Pancreas (tissue), 10 donors: ENCODE measurements at regions of chrX and their contacts with region 1.

Region 1: GRCh38 chrX:78048052-78048451 is 56.0 kb upstream of the PGK1 start:
- DNase-seq: no peak
- ATAC-seq: no peak
- H3K4me3 ChIP-seq: no peak overlapping the region
- H3K27ac ChIP-seq: no peak overlapping the region
- H3K4me1 ChIP-seq: no peaks in the 10 kb centered on the region
- H3K27me3 ChIP-seq: no peaks in the 10 kb centered on the region
- CTCF ChIP-seq: no peak

Region 2: DNA sequence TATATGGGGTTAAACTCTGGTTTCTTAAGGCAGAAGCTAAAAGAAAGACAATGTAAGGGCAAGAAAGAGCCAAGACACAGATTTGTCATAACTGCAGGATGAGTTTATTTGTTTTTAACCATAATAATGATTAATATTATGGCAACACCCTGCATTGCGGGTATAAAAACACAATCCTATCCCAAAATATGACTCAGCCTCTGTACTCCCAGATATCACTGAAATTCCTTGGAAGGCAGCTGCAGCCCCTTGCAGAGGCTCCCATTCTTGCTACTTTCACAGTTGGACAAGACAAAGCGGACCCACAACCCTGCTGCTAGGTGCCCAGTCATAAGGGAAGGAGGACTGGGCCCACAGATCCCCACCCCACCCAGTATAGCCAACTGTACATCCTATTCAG is 621.2 kb before region 1 on chrX:
- intact Hi-C with region 1: loop called in 1 of 3 experiments (anchors 10 kb)
- DNase-seq: no peak
- ATAC-seq: no peak
- H3K4me3 ChIP-seq: no peak overlapping the region
- H3K27ac ChIP-seq: no peak overlapping the region
- H3K4me1 ChIP-seq: no peaks in the 10 kb centered on the region
- H3K27me3 ChIP-seq: no peaks in the 10 kb centered on the region
- CTCF ChIP-seq: no peak

Region 3: DNA sequence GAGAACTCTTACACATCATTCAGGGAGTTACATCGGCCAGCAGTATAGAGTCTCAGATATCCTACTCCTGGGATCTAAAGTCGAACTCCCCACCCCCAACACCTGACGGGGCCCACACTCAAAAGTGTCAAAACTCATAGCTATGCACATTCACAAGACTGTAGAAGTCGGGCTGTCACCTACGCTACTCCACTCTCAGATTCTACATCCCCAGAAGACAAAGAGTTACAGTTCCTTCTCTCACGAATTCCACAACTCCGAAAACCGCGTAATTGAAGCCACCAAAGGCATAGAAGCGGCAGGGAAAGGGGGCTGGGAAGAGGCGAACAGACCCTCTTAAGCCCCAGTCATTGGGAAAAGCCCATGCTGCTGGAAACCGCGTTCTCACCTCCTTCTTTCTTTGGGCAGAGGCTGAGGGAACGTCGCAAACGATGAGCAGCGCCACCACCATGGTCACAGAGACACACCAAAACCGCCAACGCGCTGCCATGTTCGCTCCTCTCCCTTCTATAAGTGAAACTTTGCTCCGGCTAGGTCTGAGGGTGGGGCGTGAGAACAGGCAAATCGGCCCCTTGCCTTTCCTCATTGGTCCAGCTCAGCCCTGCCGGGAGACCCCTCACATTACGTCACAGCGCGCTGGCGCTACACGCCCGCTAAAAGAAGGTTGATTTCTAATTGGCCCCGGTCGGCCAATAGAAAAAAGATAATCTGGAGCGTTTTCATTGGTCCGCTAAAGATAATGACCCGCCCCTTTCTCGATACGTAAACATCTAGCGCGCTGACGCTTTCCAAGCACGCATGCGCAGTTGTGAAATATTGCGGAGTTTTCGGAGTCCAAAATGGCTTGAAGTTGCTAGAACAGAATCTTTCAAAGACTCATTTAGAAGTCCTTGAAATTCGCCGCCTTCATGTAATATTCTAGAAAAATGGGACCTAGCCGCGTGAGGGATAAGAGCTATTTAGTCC is 152.8 kb before region 1 on chrX and contains the start of gene MAGT1:
- intact Hi-C with region 1: no loop called
- DNase-seq: peak; percentile 81 to 93 (median 92)
- ATAC-seq: peak; percentile 89 to 95 (median 92)
- H3K4me3 ChIP-seq: peak within 1 kb of the TSS; percentile 15 to 58 (median 41)
- H3K27ac ChIP-seq: peak within 1 kb of the TSS; percentile 76 to 95 (median 87)
- H3K4me1 ChIP-seq: peaks cover 0 to 4% (median 0%) of the 10 kb centered on the region in 3 donors
- H3K27me3 ChIP-seq: no peaks in the 10 kb centered on the region
- CTCF ChIP-seq: no peak
- total RNA-seq, gene MAGT1: 26.1 to 51.3 (median 40.0) TPM

Region 4: GRCh38 chrX:78321809-78322208 is 273.8 kb after region 1 on chrX:
- intact Hi-C with region 1: no loop called
- DNase-seq: peak in 1 of 6 donors; percentile 35
- ATAC-seq: peak in 2 of 4 donors; percentile 70 to 72
- H3K4me3 ChIP-seq: no peak overlapping the region
- H3K27ac ChIP-seq: no peak overlapping the region
- H3K4me1 ChIP-seq: no peaks in the 10 kb centered on the region
- H3K27me3 ChIP-seq: peaks cover 0 to 13% (median 0%) of the 10 kb centered on the region in 4 donors
- CTCF ChIP-seq: no peak